ENCODE measurements at regions of chr9 and their contacts with region 1.

Region 1: DNA sequence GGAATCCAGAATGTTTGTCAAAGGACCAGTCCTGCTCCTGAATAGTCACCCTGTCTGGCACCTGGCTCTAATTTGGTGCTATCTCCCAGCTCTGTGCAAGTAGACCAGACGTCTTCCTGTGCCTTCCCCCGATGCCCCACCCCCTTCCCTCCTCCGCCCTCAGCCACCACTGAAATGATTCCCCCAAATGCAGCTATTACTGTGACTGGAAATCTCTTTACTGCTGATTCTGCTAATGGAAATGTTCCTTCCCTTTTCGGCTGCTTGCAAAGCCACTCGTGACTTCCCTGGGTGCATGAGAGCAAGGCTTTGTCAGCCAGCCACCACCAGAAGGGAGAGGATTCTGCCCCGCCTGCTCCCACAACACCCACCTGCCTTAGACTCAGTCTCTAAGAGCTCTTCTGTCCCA is 11.4 kb downstream of the ASTN2 start:
- DNase-seq: peak in 1 of 3 donors; percentile 42
- ATAC-seq: peak; percentile 32 to 36
- H3K4me3 ChIP-seq: no peak overlapping the region
- H3K27ac ChIP-seq: no peak overlapping the region
- H3K4me1 ChIP-seq: peaks cover 1% of the 10 kb centered on the region
- H3K27me3 ChIP-seq: no peaks in the 10 kb centered on the region

Region 2: DNA sequence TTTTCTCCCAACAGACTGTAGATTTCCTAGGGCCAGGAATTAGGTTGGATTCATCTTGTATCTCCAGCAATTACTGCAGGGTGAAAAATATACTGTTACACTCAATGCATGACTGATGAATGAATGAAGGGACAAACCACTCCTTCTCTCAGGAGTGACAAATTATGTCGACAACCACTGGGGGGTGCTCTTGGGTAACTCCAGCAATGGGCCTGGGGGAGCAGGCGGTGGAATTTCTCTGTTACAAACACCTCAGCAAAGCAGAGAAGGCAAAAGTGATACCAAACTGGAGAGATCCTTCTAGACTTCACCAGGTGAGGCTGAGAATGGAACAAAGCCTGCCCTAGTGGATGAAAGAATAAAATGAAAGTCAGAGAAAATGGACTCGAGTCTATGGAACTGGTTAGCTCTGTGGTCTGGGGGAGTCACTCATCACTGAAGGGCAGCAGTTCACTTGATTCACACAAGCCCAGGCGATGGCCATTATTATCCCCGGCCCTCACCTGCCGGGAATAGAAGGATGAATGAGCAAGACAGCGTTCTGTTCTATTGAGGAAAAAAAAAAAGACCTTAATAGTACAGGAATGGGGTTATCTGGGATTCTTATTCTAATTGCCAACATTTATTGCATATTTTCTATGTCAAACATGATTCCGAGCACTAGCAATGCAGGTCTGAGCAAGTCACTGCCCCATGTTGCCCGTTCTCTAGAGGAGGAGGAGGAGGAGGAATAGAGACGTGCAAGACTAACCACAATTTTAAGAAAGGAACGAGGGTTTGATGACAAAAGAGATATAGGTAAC is 329.7 kb before region 1 on chr9:
- intact Hi-C with region 1: loop called in 1 of 4 experiments (anchors 10 kb)
- DNase-seq: peak in 1 of 3 donors; percentile 53
- ATAC-seq: peak in 1 of 2 donors; percentile 43
- H3K4me3 ChIP-seq: no peak overlapping the region
- H3K27ac ChIP-seq: no peak overlapping the region
- H3K4me1 ChIP-seq: no peaks in the 10 kb centered on the region
- H3K27me3 ChIP-seq: no peaks in the 10 kb centered on the region

Region 3: DNA sequence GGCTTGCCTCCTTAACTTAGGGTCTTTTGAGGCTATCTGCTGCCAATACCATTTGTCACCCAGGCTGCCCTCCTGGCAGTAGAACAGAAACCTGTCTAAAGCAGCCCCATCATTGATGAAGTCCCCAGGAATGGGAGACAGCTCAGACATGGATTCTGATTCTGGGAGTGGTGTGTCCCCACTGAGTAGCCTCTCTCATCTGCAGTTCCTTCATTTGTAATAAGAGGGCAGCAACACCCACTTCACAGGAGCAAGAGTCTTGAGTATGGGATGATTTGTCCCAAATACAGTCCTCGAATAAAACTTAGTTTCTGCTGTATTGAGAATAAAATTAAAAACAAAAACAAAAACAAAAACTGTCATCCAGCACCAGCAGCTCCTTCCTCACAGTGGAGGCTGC is 156.1 kb before region 1 on chr9:
- intact Hi-C with region 1: loop called in 1 of 4 experiments (anchors 10 kb)
- DNase-seq: no peak
- ATAC-seq: peak; percentile 49 to 64
- H3K4me3 ChIP-seq: no peak overlapping the region
- H3K27ac ChIP-seq: no peak overlapping the region
- H3K4me1 ChIP-seq: no peaks in the 10 kb centered on the region
- H3K27me3 ChIP-seq: no peaks in the 10 kb centered on the region

Region 4: GRCh38 chr9:117434566-117434965 is 31.2 kb after region 1 on chr9:
- intact Hi-C with region 1: no loop called
- DNase-seq: no peak
- ATAC-seq: no peak
- H3K4me3 ChIP-seq: no peak overlapping the region
- H3K27ac ChIP-seq: no peak overlapping the region
- H3K4me1 ChIP-seq: no peaks in the 10 kb centered on the region
- H3K27me3 ChIP-seq: no peaks in the 10 kb centered on the region

Region 5: GRCh38 chr9:117464941-117465616 is 61.7 kb after region 1 on chr9:
- intact Hi-C with region 1: no loop called
- DNase-seq: peak in 1 of 3 donors; percentile 38
- ATAC-seq: peak; percentile 32 to 43
- H3K4me3 ChIP-seq: no peak overlapping the region
- H3K27ac ChIP-seq: no peak overlapping the region
- H3K4me1 ChIP-seq: no peaks in the 10 kb centered on the region
- H3K27me3 ChIP-seq: no peaks in the 10 kb centered on the region

Measured in right cardiac atrium (tissue), 5 donors.